Activated CD4-positive, alpha-beta T cell treated with anti-CD3 and anti-CD28 coated beads, Interleukin-2, amount 10 ng/mL, durations not matched to agents 24 days and 14 days (primary cell): ENCODE measurements at regions of chr12 and their contacts with region 1.

Region 1: DNA sequence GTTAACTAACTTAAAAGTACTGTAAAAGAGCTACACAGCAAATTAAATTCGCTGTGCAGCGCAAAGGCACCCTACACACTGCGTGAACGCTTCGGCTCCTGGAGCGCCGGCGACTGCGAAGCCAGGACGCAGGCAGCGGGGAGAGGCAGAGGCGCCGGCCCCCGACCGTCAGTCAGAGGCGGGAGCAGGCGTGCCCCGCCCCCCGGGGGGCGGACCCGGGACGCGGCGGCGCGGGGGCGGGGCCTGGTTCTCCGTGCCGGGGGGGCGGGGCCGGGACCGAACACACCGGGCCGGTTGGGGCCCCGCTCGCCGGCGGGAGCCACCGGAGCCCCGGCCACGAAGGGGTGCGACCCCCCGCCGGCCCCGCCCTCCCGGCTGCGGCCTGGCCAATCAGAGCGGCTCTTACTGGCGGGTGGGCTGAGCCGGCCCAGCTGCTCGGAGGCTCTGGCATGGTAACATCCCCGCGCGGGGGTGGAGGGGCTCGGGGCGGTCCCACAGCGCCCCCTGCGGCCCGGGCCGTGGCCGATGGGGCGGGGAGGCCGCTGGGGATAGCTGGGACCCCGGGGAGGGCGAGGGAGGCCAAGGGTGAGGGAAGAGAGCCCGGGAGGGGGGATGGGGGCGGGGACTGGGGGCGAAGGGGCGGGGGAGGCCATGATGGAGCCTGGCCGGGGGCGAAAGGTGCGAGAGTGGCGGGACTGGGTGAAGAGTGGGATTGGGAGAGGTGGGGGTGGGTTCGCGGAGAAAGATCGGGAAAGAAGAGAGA is at the start of gene PRPF40B:
- DNase-seq: peak; percentile 95
- H3K4me3 Mint-ChIP-seq: peak within 1 kb of the TSS; percentile 83
- H3K27ac Mint-ChIP-seq: peak within 1 kb of the TSS; percentile 84
- H3K4me1 Mint-ChIP-seq: peaks cover 24% of the 10 kb centered on the region
- H3K27me3 Mint-ChIP-seq: peaks cover 30% of the 10 kb centered on the region
- total RNA-seq, gene PRPF40B: 12.3 and 12.7 TPM in 2 replicates

Region 2: DNA sequence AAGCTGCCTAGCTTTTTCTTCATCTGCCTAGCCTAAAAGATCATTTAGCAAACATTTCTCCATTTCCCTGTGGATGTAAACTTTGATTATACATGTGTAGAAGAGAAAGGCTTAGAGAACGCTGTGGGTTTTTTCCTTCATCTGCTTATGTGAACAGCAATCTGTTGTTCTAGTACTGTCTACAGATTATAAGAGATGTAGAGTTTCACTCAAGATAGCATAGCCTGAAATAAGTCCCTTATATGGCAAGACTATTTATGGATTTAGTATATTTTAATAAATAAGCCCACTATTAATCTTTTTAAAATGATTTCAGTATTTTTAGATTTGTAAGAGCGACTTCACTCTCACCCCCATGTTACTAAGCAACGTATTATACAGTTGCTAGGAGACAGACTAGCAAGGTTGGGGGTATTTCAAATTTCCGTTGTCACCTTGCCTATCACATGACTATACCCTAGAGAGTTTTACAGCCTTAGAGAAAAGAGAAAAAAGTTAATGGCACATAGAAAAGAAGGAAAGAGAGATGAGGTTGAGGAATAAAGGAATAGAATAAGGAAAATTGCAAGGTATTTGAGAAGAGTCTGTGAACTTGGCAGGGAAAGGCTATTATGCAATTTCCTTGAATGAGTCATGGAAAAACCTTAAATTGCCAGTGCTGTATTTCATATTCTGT is 422.3 kb before region 1 on chr12:
- intact Hi-C with region 1: no loop called
- DNase-seq: no peak
- H3K4me3 Mint-ChIP-seq: no peak overlapping the region
- H3K27ac Mint-ChIP-seq: peak overlapping the region; percentile 10
- H3K4me1 Mint-ChIP-seq: peaks cover 10% of the 10 kb centered on the region
- H3K27me3 Mint-ChIP-seq: peaks cover 9% of the 10 kb centered on the region

Region 3: GRCh38 chr12:49567611-49568441 is 55.5 kb before region 1 on chr12 and contains the start of gene MCRS1:
- intact Hi-C with region 1: loop called (anchors 5 kb)
- DNase-seq: peak; percentile 97
- H3K4me3 Mint-ChIP-seq: peak within 1 kb of the TSS; percentile 93
- H3K27ac Mint-ChIP-seq: peak within 1 kb of the TSS; percentile 99
- H3K4me1 Mint-ChIP-seq: peaks cover 39% of the 10 kb centered on the region
- H3K27me3 Mint-ChIP-seq: no peaks in the 10 kb centered on the region
- total RNA-seq, gene MCRS1: 71.4 and 79.6 TPM in 2 replicates

Region 4: GRCh38 chr12:49580572-49581535 is 42.5 kb before region 1 on chr12:
- intact Hi-C with region 1: loop called (anchors 5 kb)
- DNase-seq: peak; percentile 89
- H3K4me3 Mint-ChIP-seq: no peak overlapping the region
- H3K27ac Mint-ChIP-seq: peak overlapping the region; percentile 56
- H3K4me1 Mint-ChIP-seq: peaks cover 19% of the 10 kb centered on the region
- H3K27me3 Mint-ChIP-seq: no peaks in the 10 kb centered on the region

Region 5: GRCh38 chr12:49636979-49637755 is 13.8 kb after region 1 on chr12:
- intact Hi-C with region 1: loop called (anchors 1 kb)
- DNase-seq: peak; percentile 88
- H3K4me3 Mint-ChIP-seq: no peak overlapping the region
- H3K27ac Mint-ChIP-seq: no peak overlapping the region
- H3K4me1 Mint-ChIP-seq: peaks cover 11% of the 10 kb centered on the region
- H3K27me3 Mint-ChIP-seq: no peaks in the 10 kb centered on the region

Region 6: GRCh38 chr12:49662998-49663843 is 39.9 kb after region 1 on chr12:
- intact Hi-C with region 1: no loop called
- DNase-seq: peak; percentile 92
- H3K4me3 Mint-ChIP-seq: peak overlapping the region; percentile 80
- H3K27ac Mint-ChIP-seq: peak overlapping the region; percentile 93
- H3K4me1 Mint-ChIP-seq: peaks cover 66% of the 10 kb centered on the region
- H3K27me3 Mint-ChIP-seq: no peaks in the 10 kb centered on the region